SK-N-SH (cell line): ENCODE measurements at regions of chr7 and their contacts with region 1.

Region 1: GRCh38 chr7:36967387-36967786 is 243.1 kb upstream of the AOAH start:
- DNase-seq: peak; percentile 79
- H3K4me3 ChIP-seq: no peak overlapping the region
- H3K27ac ChIP-seq: peak overlapping the region in 1 of 2 experiments; percentile 99; a peak in 2 of 4 replicates
- H3K4me1 ChIP-seq: peaks cover 0 to 30% of the 10 kb centered on the region in 2 experiments; a peak in 2 of 4 replicates
- H3K27me3 ChIP-seq: no peaks in the 10 kb centered on the region
- CTCF ChIP-seq: peak; percentile 96
- EP300 ChIP-seq: peak in 1 of 2 experiments; percentile 25; a peak in 1 of 4 replicates
- RAD21 ChIP-seq: peak; percentile 95

Region 2: DNA sequence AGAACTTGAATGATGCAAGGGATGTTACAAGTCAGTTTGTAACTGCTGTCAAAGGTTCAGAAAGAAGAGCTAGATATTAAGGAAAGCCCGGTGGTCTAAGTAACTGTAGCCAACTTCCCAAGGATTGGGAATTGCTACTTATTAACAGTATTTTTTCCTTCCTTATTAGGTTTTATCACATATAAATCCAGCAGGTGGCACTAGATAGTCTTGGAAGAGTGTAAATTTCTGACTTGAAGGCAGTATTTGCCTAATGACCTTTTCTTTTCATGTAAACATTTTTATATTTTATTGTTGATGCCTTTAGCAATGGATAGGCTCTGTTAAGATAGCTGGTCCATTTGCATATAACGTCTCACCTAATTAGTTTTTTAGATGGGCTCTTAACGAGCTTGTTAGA is 526.5 kb before region 1 on chr7:
- CTCF ChIA-PET with region 1: interaction called, 15 read pairs
- POLR2A ChIA-PET with region 1: no interaction called
- DNase-seq: peak; percentile 53
- H3K4me3 ChIP-seq: no peak overlapping the region
- H3K27ac ChIP-seq: no peak overlapping the region
- H3K4me1 ChIP-seq: no peaks in the 10 kb centered on the region
- H3K27me3 ChIP-seq: no peaks in the 10 kb centered on the region
- CTCF ChIP-seq: peak; percentile 77
- EP300 ChIP-seq: no peak
- RAD21 ChIP-seq: peak; percentile 72

Region 3: GRCh38 chr7:36875794-36876193 is 91.6 kb before region 1 on chr7:
- CTCF ChIA-PET with region 1: interaction called, 12 read pairs
- POLR2A ChIA-PET with region 1: no interaction called
- DNase-seq: no peak
- H3K4me3 ChIP-seq: no peak overlapping the region
- H3K27ac ChIP-seq: no peak overlapping the region
- H3K4me1 ChIP-seq: peaks cover 0 to 28% of the 10 kb centered on the region in 2 experiments; a peak in 2 of 4 replicates
- H3K27me3 ChIP-seq: no peaks in the 10 kb centered on the region
- CTCF ChIP-seq: no peak
- EP300 ChIP-seq: no peak
- RAD21 ChIP-seq: no peak

Region 4: GRCh38 chr7:36904802-36905201 is 62.6 kb before region 1 on chr7:
- CTCF ChIA-PET with region 1: interaction called, 19 read pairs
- POLR2A ChIA-PET with region 1: interaction called, 4 read pairs
- DNase-seq: peak; percentile 59
- H3K4me3 ChIP-seq: no peak overlapping the region
- H3K27ac ChIP-seq: peak overlapping the region in 1 of 2 experiments; percentile 97; a peak in 2 of 4 replicates
- H3K4me1 ChIP-seq: peaks cover 0 to 38% of the 10 kb centered on the region in 2 experiments; a peak in 2 of 4 replicates
- H3K27me3 ChIP-seq: no peaks in the 10 kb centered on the region
- CTCF ChIP-seq: no peak
- EP300 ChIP-seq: peak; percentile 17 to 97; a peak in 2 of 4 replicates
- RAD21 ChIP-seq: peak; percentile 45

Region 5: DNA sequence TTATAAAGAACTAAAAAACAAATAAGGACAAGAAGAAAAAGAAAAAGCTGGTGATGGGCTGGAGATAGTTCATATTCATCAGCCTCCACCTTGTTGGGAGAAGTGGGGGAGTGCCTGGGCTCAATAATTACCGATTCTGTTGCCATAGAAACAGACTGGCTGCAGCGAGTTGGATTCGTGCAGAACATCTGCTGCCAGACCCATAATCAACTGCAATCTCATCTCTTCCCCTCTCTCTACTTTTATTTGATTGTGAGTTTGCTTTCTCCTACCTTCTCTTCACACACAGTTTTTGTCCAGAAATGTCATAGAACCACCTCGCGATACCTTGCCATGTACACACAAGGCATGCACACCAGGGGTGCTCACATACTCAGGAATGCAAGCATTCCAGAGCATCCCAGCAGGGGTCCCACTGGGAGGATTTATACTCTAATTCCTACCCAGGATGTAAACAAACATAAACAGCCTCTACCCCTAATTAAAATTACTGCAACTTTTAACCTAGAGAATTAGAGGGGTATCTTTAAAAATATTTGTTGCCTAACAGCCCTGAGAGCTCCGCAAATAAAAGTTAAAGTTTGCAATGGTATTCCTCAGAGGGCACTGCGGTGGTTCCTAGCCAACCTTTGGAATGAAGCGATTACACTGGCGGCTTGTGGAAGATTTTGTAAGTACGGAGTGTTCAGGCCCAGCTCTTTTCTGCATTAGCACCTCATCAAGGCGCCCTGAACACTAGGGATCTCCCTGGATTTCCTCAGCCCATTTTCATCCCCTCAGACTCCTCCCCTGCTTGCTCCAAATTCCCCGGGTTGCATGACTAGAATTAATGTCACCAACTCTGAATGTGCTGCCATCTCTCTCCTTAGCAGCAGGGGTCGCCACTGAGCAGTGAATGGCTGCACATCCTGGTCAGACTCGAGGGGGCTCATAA is 19.3 kb after region 1 on chr7:
- CTCF ChIA-PET with region 1: interaction called, 241 read pairs
- POLR2A ChIA-PET with region 1: interaction called, 17 read pairs
- DNase-seq: peak; percentile 79
- H3K4me3 ChIP-seq: peak overlapping the region; percentile 6 to 56; a peak in 3 of 4 replicates
- H3K27ac ChIP-seq: peak overlapping the region in 1 of 2 experiments; percentile 93; a peak in 2 of 4 replicates
- H3K4me1 ChIP-seq: peaks cover 0 to 35% of the 10 kb centered on the region in 2 experiments; a peak in 2 of 4 replicates
- H3K27me3 ChIP-seq: peaks cover 32% of the 10 kb centered on the region; the same call in 1 of the 2 replicates
- CTCF ChIP-seq: peak; percentile 99
- EP300 ChIP-seq: peak in 1 of 2 experiments; percentile 49; a peak in 2 of 4 replicates
- RAD21 ChIP-seq: peak; percentile 91

Region 6: DNA sequence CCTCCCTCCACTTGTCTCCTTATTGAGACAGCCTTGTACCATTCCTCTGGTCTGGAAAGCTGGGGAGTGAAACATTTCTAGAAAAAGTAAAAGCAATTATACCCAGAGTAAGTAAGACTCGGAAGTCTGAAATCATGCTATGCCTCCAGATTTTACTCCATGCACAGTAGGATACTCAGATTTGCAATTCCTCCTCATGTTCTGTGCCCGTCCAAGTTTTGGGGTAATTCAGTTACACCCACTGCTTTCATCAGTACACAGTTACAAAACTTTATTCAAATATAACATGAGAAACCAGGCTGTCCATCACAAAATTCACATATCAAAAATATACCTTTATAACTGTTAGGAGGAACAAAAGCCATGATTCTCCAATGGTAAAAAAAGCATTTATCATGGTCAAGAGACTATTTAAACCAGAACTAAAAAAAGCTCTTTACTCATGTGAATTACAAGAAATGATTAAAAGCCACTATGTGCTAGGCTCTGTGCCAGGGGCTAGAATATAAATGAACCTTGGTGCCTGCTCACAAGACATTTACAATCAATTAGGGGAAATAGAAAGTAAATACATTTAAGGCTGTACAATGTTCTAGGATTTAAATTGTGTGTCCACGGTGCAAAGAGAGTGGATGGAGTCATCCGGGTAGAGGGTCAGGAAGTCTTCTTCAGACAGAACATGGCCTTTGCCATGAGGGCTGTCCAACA is 161.1 kb after region 1 on chr7:
- CTCF ChIA-PET with region 1: no interaction called
- POLR2A ChIA-PET with region 1: no interaction called
- DNase-seq: no peak
- H3K4me3 ChIP-seq: no peak overlapping the region
- H3K27ac ChIP-seq: no peak overlapping the region
- H3K4me1 ChIP-seq: no peaks in the 10 kb centered on the region; a peak in 1 of 4 replicates
- H3K27me3 ChIP-seq: no peaks in the 10 kb centered on the region
- CTCF ChIP-seq: no peak
- EP300 ChIP-seq: no peak
- RAD21 ChIP-seq: no peak

Region 7: GRCh38 chr7:37173670-37174069 is 206.3 kb after region 1 on chr7:
- CTCF ChIA-PET with region 1: interaction called, 38 read pairs
- POLR2A ChIA-PET with region 1: no interaction called
- DNase-seq: no peak
- H3K4me3 ChIP-seq: no peak overlapping the region
- H3K27ac ChIP-seq: no peak overlapping the region
- H3K4me1 ChIP-seq: peaks cover 0 to 5% of the 10 kb centered on the region in 2 experiments; a peak in 1 of 4 replicates
- H3K27me3 ChIP-seq: no peaks in the 10 kb centered on the region
- CTCF ChIP-seq: no peak
- EP300 ChIP-seq: no peak
- RAD21 ChIP-seq: no peak